H1 (cell line): ENCODE measurements at regions of chr4 and their contacts with region 1.

Region 1: DNA sequence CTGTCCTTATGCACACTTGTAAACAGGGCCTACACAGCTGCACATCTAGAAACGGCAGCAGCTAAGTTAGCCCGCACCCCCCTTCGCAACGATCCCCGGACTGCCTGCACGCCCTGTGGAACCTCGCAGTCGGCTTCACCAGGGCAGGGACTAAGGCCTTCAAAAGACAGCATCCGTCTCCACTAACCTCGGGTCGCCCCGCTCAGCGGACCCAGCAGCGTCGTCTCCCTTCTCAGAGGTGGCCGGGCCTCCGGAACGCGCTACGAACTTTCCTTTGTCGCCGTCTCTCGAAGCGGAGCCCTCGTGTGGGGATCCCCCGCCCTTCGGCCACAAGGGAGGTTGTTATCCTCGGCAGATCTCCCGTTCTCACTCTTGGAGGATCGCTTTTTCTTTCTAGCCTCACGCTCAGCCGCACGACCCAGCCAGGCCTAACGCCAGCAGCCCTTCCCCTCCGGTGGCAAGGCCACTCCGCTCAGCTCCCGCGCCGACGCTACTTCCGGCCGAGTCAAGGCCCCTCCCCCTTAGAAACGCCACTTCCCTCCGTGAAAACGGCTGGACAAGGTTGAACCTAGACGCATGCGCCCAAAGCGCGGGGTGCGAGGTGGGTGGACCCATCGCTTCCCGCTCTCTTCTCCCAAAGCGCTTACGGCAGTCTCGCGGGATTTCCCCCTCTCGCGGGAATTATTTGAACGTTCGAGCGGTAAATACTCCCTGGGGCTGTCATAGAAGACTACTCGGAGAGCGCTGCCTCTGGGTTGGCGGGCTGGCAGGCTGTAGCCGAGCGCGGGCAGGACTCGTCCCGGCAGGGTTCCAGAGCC is at the starts of genes DCAF16 and NCAPG:
- DNase-seq: peak; percentile 98 to 99
- H3K4me3 ChIP-seq: peak within 1 kb of the TSS; percentile 94 to 98 (median 97)
- H3K27ac ChIP-seq: peak within 1 kb of the TSS; percentile 97
- H3K4me1 ChIP-seq: peaks cover 2 to 6% (median 4%) of the 10 kb centered on the region in 4 experiments; a peak in 5 of 7 replicates
- H3K27me3 ChIP-seq: no peaks in the 10 kb centered on the region
- CTCF ChIP-seq: no peak
- EP300 ChIP-seq: no peak
- POLR2A ChIP-seq: peak; percentile 97 to 98
- RAD21 ChIP-seq: no peak
- total RNA-seq, gene DCAF16: 55.7 and 57.9 TPM in 2 replicates
- total RNA-seq, gene NCAPG: 52.3 and 56.6 TPM in 2 replicates

Region 2: GRCh38 chr4:17797808-17798207 is 12.7 kb before region 1 on chr4:
- CTCF ChIA-PET with region 1: interaction called, 23 read pairs
- POLR2A ChIA-PET with region 1: interaction called, 19 read pairs
- DNase-seq: no peak
- H3K4me3 ChIP-seq: no peak overlapping the region
- H3K27ac ChIP-seq: no peak overlapping the region
- H3K4me1 ChIP-seq: no peaks in the 10 kb centered on the region
- H3K27me3 ChIP-seq: no peaks in the 10 kb centered on the region
- CTCF ChIP-seq: no peak
- EP300 ChIP-seq: no peak
- POLR2A ChIP-seq: no peak
- RAD21 ChIP-seq: no peak